ENCODE measurements at regions of chr1 and their contacts with region 1.

Region 1: GRCh38 chr1:186869526-186870228 is 40.9 kb downstream of the PLA2G4A start:
- DNase-seq: no peak
- H3K4me3 Mint-ChIP-seq: no peak overlapping the region
- H3K27ac Mint-ChIP-seq: peak overlapping the region; percentile 28
- H3K4me1 Mint-ChIP-seq: peaks cover 33% of the 10 kb centered on the region
- H3K27me3 Mint-ChIP-seq: no peaks in the 10 kb centered on the region
- CTCF ChIP-seq: no peak

Region 2: GRCh38 chr1:186828611-186829454 is 40.8 kb before region 1 on chr1 and contains the start of gene PLA2G4A:
- CTCF ChIA-PET with region 1: no interaction called
- intact Hi-C with region 1: loop called (anchors 2 kb)
- DNase-seq: peak; percentile 63
- H3K4me3 Mint-ChIP-seq: peak within 1 kb of the TSS; percentile 97
- H3K27ac Mint-ChIP-seq: peak within 1 kb of the TSS; percentile 90
- H3K4me1 Mint-ChIP-seq: peaks cover 23% of the 10 kb centered on the region
- H3K27me3 Mint-ChIP-seq: no peaks in the 10 kb centered on the region
- CTCF ChIP-seq: no peak
- total RNA-seq, gene PLA2G4A: 29.8 and 36.0 TPM in 2 replicates

Region 3: DNA sequence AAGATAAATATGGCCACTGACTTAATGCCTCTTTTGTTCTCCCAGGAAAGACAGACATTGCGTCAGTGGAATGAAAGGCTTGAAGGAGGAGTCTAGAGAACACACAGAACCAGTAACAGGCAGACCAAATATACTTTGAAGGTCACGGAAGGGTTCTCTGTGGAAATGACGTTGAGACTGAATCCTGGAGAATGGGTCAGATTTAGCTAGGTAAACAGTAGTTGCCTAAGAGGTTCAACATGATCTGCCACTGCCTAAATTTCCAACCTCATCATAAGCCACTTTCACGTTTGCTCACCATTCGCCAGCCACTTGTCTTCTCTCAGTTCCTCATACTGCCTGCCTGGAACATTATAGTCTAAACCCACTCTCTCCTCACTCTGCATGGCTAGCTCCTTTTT is 20.4 kb before region 1 on chr1:
- CTCF ChIA-PET with region 1: no interaction called
- intact Hi-C with region 1: loop called (anchors 2 kb)
- DNase-seq: peak; percentile 73
- H3K4me3 Mint-ChIP-seq: peak overlapping the region; percentile 37
- H3K27ac Mint-ChIP-seq: peak overlapping the region; percentile 88
- H3K4me1 Mint-ChIP-seq: peaks cover 39% of the 10 kb centered on the region
- H3K27me3 Mint-ChIP-seq: no peaks in the 10 kb centered on the region
- CTCF ChIP-seq: no peak